Activated CD8-positive, alpha-beta memory T cell treated with anti-CD3 and anti-CD28 coated beads, Interleukin-2, amount 10 ng/mL, durations not matched to agents 7 days and 5 days (primary cell): ENCODE measurements at regions of chr17 and their contacts with region 1.

Region 1: GRCh38 chr17:76397687-76398487 is 13.5 kb downstream of the SPHK1 start:
- DNase-seq: peak; percentile 91
- ATAC-seq: peak; percentile 90
- H3K4me3 Mint-ChIP-seq: no peak overlapping the region
- H3K27ac Mint-ChIP-seq: no peak overlapping the region
- H3K4me1 Mint-ChIP-seq: no peaks in the 10 kb centered on the region
- H3K27me3 Mint-ChIP-seq: no peaks in the 10 kb centered on the region

Region 2: DNA sequence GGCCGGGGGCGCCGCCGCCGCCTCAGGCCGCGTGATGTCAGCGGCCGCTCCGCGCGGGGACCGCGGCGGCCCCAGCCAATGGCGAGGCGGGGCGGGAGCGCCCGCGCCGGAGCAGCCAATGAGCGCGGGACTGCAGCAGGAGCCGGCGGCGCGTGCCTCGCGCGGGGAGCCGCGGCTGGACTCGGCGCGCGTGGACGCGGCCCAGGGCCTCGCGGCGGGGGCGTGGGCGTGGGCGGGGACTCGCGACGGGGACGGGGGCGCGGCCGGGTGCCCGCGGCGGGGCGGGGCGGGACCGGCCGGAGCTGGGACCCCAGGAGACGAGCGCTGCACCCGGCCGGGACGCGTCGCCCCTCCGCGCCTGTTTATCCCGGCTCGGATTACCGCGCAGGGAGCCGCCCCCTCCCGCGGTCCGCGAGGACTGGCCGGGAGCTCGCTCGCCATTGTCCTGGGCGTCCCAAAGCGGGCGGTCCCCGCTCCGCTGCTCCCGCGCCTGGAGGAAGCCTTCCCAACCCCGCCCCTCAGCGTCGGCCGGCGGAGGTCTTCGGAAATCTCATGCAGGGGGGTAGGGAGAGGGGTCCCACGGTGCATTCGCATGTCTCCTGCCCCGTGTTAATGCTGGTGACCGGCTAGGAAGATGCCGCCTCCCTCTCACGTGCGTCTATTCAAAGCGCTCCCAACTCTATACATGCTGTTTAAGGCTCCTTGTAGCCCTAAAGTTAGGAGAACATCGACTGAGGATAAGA is 157.3 kb before region 1 on chr17 and contains the start of gene RNF157:
- CTCF ChIA-PET with region 1: no interaction called
- DNase-seq: peak; percentile 70
- ATAC-seq: peak; percentile 94
- H3K4me3 Mint-ChIP-seq: peak within 1 kb of the TSS; percentile 84
- H3K27ac Mint-ChIP-seq: peak within 1 kb of the TSS; percentile 89
- H3K4me1 Mint-ChIP-seq: peaks cover 67% of the 10 kb centered on the region
- H3K27me3 Mint-ChIP-seq: peaks cover 3% of the 10 kb centered on the region
- total RNA-seq, gene RNF157: 73.0 to 148 TPM

Region 3: DNA sequence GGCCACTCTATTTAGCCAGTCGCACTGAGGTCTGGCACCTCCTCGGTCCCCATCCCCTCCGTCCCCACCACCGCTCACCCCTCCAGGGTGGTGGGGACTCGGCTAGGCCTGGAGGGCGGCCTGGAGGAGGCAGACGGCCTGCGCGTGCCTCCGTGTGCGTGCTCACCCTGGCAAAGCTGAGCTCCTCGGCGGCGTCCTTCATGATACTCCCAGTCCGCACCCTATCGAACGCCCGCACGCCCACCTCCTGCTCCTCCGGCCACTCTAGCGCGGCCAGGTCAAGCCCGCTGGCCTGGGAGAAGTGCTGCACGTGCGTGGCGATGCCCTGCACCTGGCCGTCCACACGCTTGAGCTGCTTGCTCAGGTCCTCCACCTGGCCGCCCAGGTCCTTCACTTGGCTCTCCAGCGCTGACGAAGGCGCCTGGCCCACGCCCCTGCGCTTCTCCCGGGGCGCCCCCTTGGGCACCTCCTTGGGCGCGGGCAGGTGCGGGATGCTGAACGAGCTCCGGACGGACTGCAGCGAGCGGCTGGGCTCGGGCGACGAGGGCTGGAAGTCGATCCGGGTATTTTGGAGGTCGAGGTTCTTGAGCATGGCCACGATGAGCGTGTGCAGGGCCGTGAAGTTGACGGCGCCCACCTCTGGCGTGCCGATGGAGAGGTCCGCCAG is 90.5 kb before region 1 on chr17:
- CTCF ChIA-PET with region 1: interaction called, 171 read pairs
- DNase-seq: no peak
- ATAC-seq: no peak
- H3K4me3 Mint-ChIP-seq: no peak overlapping the region
- H3K27ac Mint-ChIP-seq: no peak overlapping the region
- H3K4me1 Mint-ChIP-seq: peaks cover 2% of the 10 kb centered on the region
- H3K27me3 Mint-ChIP-seq: no peaks in the 10 kb centered on the region

Region 4: GRCh38 chr17:76365256-76365903 is 32.5 kb before region 1 on chr17:
- CTCF ChIA-PET with region 1: interaction called, 20 read pairs
- DNase-seq: no peak
- ATAC-seq: no peak
- H3K4me3 Mint-ChIP-seq: no peak overlapping the region
- H3K27ac Mint-ChIP-seq: no peak overlapping the region
- H3K4me1 Mint-ChIP-seq: no peaks in the 10 kb centered on the region
- H3K27me3 Mint-ChIP-seq: no peaks in the 10 kb centered on the region

Region 5: GRCh38 chr17:76408052-76408849 is 10.4 kb after region 1 on chr17:
- CTCF ChIA-PET with region 1: interaction called, 26 read pairs
- DNase-seq: peak; percentile 80
- ATAC-seq: peak; percentile 81
- H3K4me3 Mint-ChIP-seq: no peak overlapping the region
- H3K27ac Mint-ChIP-seq: no peak overlapping the region
- H3K4me1 Mint-ChIP-seq: peaks cover 4% of the 10 kb centered on the region
- H3K27me3 Mint-ChIP-seq: no peaks in the 10 kb centered on the region

Region 6: DNA sequence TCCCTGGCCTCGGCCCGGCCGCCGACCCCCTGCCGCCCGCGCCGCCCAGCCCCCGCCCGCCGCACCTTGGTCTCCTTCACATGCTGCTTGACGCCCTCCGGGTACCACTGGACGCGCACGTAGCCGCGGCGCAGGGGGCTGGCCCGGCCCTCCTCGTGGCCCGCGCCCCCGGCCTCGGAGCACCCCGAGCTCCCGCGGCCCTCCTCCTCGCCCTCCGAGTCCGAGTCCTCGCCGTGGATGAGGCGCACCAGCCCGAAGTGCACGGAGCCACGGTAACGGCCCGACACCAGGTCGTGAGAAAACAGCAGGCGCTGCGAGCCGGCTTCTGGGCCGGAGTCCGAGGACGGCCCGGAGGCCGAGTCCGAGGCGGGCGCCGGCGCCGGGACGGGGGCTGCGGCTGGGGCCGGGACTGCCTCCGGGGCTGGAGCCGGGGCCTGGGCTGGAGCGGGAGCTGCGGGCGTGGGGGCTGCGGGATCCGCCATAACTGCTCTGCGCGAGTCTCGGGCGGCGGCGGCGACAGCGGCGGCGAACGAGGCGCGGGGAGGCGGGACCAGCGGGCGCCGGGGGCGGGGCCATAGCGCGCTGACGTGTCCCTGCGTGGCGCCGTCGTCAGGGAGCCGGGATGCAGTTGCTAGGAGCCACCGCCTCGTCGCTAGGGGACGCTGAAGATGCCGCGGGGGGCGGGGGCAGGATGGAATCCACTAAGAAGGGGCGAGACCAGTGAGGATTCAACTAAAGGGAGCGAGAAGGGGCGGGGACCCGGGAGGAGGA is 55.0 kb after region 1 on chr17 and contains the start of gene UBE2O:
- CTCF ChIA-PET with region 1: interaction called, 15 read pairs
- DNase-seq: peak; percentile 95
- ATAC-seq: peak; percentile 94
- H3K4me3 Mint-ChIP-seq: peak within 1 kb of the TSS; percentile 86
- H3K27ac Mint-ChIP-seq: peak within 1 kb of the TSS; percentile 54
- H3K4me1 Mint-ChIP-seq: peaks cover 34% of the 10 kb centered on the region
- H3K27me3 Mint-ChIP-seq: peaks cover 6% of the 10 kb centered on the region
- total RNA-seq, gene UBE2O: 30.2 to 34.7 TPM

Region 7: GRCh38 chr17:76467366-76467765 is 69.5 kb after region 1 on chr17 and contains the start of gene AANAT:
- CTCF ChIA-PET with region 1: no interaction called
- DNase-seq: no peak
- ATAC-seq: no peak
- H3K4me3 Mint-ChIP-seq: no peak within 1 kb of the TSS
- H3K27ac Mint-ChIP-seq: no peak within 1 kb of the TSS
- H3K4me1 Mint-ChIP-seq: peaks cover 4% of the 10 kb centered on the region
- H3K27me3 Mint-ChIP-seq: peaks cover 5% of the 10 kb centered on the region
- total RNA-seq, gene AANAT: not detected